HEK293T (cell line): ENCODE measurements at regions of chr17 and their contacts with region 1.

Region 1: DNA sequence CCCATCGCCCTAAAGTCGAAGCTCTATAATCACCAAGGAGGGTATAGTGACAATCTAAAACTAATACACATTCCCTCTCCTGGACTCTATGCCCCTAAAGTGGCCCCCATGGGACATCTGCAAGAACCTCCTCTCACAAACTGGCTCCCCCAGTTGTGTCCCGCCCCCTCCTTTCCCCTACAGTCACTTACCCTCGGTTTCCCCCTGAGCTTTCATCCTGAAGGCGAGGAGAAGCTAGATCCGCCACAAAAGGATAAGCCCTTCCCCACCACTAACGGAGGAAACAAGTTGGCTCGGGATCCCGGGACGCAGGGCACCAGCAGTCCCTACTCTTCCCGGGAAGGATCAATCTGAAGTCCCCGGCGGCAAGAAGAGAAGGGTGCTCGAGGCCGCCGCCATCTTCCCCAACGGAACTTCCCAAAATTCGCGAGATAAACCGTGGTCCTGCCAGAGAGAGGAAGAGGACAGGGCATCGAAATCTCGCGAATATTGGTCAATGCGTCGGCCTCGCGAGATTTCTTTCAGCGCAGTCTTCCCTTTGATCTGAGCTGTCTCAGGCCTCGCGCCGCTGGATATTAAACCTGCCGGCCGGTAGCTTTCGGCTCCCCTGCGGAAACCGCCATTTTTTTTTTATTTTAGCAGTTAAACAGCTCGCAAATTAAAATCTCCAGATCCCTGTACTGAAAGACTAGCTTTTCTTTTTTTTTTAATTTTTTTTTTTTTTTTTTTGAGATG is at the start of gene MED1:
- DNase-seq: peak; percentile 94

Region 2: GRCh38 chr17:39401412-39402243 is 49.4 kb before region 1 on chr17 and contains the start of gene FBXL20:
- CTCF ChIA-PET with region 1: no interaction called
- POLR2A ChIA-PET with region 1: interaction called, 10 read pairs
- DNase-seq: peak; percentile 87

Region 3: GRCh38 chr17:39461113-39461925 is 10.3 kb after region 1 on chr17 and contains the start of gene CDK12:
- CTCF ChIA-PET with region 1: interaction called, 3 read pairs
- POLR2A ChIA-PET with region 1: interaction called, 124 read pairs
- DNase-seq: peak; percentile 92

Region 4: DNA sequence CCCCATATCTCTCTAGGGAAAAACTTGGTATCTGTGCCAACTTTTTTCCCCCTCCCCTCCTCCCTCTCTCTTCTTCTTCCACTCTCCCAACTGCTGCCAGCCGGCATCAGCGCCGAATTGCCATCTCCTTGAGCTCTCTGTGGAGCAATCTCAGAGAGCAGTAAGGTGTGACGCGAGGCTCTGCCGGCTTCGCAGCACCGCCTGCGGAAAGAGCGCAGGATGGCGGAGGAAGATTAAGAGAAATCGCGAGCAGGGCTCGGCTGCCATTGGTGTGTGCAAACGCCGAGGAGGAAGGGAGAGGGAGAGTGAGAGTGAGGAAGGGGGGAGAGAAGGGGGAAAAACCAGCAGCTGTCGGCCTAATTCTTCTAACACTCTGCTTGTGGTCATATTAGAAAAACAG is 112.5 kb after region 1 on chr17:
- CTCF ChIA-PET with region 1: no interaction called
- POLR2A ChIA-PET with region 1: no interaction called
- DNase-seq: no peak